ENCODE measurements at regions of chr15 and their contacts with region 1.

Region 1: GRCh38 chr15:58070801-58071418 is 5.4 kb upstream of the ALDH1A2 start:
- DNase-seq: no peak
- H3K4me3 ChIP-seq: no peak overlapping the region
- H3K27ac ChIP-seq: no peak overlapping the region
- H3K4me1 ChIP-seq: peaks cover 0 to 12% (median 8%) of the 10 kb centered on the region in 4 donors
- H3K27me3 ChIP-seq: peaks cover 2 to 43% (median 8%) of the 10 kb centered on the region in 4 donors
- CTCF ChIP-seq: peak; percentile 80 to 93 (median 85)
- EP300 ChIP-seq: no peak
- POLR2A ChIP-seq: no peak

Region 2: GRCh38 chr15:57561041-57561711 is 509.7 kb before region 1 on chr15:
- intact Hi-C with region 1: loop called (anchors 5 kb)
- DNase-seq: no peak
- H3K4me3 ChIP-seq: no peak overlapping the region
- H3K27ac ChIP-seq: peak overlapping the region in 3 of 4 donors; percentile 53 to 63 (median 54)
- H3K4me1 ChIP-seq: peaks cover 16 to 30% (median 21%) of the 10 kb centered on the region in 4 donors
- H3K27me3 ChIP-seq: no peaks in the 10 kb centered on the region
- CTCF ChIP-seq: peak; percentile 90 to 96 (median 95)
- EP300 ChIP-seq: no peak
- POLR2A ChIP-seq: no peak

Region 3: DNA sequence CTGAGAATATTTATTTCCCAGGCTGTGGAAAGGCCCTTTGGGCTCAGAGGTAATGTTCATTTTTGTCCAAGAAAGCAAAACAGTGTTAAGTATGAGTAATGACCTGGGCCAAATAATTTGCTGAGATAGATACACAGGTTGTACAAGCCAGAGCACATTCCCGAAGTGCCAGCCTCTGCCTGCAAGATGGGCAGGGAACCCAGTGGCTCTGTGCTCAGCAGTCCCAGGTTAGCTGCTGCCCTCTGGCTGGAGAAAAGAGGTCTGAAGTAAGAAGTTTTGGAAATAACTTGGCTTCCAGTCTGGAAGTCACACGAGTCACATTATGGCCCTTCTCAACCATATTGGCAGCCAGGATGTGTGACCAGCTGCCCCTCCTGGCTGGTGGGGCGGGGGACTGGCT is 459.0 kb before region 1 on chr15:
- intact Hi-C with region 1: no loop called
- DNase-seq: no peak
- H3K4me3 ChIP-seq: no peak overlapping the region
- H3K27ac ChIP-seq: peak overlapping the region; percentile 83 to 86 (median 84)
- H3K4me1 ChIP-seq: peaks cover 58 to 92% (median 71%) of the 10 kb centered on the region in 4 donors
- H3K27me3 ChIP-seq: no peaks in the 10 kb centered on the region
- CTCF ChIP-seq: peak; percentile 56 to 73 (median 70)
- EP300 ChIP-seq: no peak
- POLR2A ChIP-seq: no peak

Region 4: GRCh38 chr15:57743424-57743823 is 327.5 kb before region 1 on chr15:
- intact Hi-C with region 1: loop called (anchors 10 kb)
- DNase-seq: no peak
- H3K4me3 ChIP-seq: no peak overlapping the region
- H3K27ac ChIP-seq: no peak overlapping the region
- H3K4me1 ChIP-seq: peaks cover 0 to 6% (median 2%) of the 10 kb centered on the region in 4 donors
- H3K27me3 ChIP-seq: no peaks in the 10 kb centered on the region
- CTCF ChIP-seq: no peak
- EP300 ChIP-seq: no peak
- POLR2A ChIP-seq: no peak

Region 5: DNA sequence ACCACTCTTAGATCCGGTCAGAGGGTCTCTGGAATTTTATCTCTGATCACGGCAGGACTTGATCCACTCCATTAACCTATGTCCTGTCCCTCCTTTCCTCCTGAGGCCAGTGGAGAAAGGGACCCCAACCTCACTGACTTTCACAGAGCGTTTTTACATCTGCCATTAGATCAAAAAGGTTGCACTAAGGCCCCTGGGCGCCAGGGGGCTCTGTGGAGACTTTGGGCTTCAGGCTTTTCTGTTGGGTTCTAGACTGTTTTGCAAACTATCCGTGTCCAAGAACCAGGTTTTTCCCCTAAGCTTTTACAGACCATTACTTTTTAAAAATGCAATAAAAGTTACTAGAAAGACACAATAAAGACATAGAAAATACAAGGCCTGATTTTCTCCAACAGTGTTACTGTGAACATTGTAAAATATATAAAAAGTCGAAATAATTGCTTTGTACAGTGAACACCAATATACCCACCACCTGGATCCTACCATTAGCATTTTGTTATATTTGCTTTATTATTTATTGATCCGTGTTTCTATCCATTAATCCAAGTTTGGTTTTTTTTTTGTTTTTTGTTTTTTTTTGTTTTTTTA is 204.7 kb before region 1 on chr15:
- intact Hi-C with region 1: loop called (anchors 2 kb)
- DNase-seq: peak; percentile 50
- H3K4me3 ChIP-seq: no peak overlapping the region
- H3K27ac ChIP-seq: no peak overlapping the region
- H3K4me1 ChIP-seq: no peaks in the 10 kb centered on the region
- H3K27me3 ChIP-seq: peaks cover 0 to 13% (median 0%) of the 10 kb centered on the region in 4 donors
- CTCF ChIP-seq: peak; percentile 59 to 73 (median 59)
- EP300 ChIP-seq: no peak
- POLR2A ChIP-seq: no peak

Region 6: GRCh38 chr15:57890351-57890750 is 180.6 kb before region 1 on chr15:
- intact Hi-C with region 1: no loop called
- DNase-seq: no peak
- H3K4me3 ChIP-seq: no peak overlapping the region
- H3K27ac ChIP-seq: no peak overlapping the region
- H3K4me1 ChIP-seq: no peaks in the 10 kb centered on the region
- H3K27me3 ChIP-seq: no peaks in the 10 kb centered on the region
- CTCF ChIP-seq: no peak
- EP300 ChIP-seq: no peak
- POLR2A ChIP-seq: no peak

Region 7: DNA sequence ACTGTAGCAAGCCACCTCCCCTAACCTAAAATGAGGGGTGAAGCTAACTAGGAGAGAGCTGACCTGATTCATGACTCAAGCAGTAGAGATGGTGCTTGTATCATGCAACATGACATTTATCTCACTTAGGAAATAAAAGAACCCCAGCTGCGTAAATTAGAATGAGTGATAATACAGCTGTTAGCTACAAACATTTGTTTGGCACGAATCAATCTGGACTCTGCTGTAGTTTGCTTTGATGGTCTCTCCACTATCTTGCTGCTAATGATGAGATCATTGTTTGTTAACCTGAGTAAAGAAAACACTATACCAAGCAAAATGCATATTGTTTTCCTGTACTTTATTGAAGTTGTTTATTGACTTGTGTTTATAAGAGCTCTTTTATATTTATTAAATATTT is 98.0 kb before region 1 on chr15:
- intact Hi-C with region 1: loop called (anchors 5 kb)
- DNase-seq: no peak
- H3K4me3 ChIP-seq: no peak overlapping the region
- H3K27ac ChIP-seq: no peak overlapping the region
- H3K4me1 ChIP-seq: no peaks in the 10 kb centered on the region
- H3K27me3 ChIP-seq: no peaks in the 10 kb centered on the region
- CTCF ChIP-seq: no peak
- EP300 ChIP-seq: no peak
- POLR2A ChIP-seq: no peak

Region 8: DNA sequence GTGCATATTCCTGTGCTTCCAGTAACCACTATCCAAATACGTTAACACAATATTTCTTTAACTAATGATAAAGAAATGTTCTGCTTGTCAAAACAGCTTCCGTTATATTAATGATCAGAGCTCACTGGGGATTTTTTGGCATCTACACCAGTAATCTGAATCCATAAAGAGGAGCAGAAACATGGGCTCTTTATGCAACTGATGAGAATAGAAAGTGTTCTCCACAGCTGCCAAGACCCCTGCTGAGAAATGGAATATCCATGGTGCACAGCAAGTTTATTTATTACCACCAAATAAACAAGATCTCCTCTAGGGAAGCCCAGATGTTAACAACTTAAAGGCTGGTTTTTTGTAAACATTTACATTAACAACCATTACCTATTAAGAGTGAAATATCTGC is 59.9 kb before region 1 on chr15:
- intact Hi-C with region 1: no loop called
- DNase-seq: no peak
- H3K4me3 ChIP-seq: no peak overlapping the region
- H3K27ac ChIP-seq: no peak overlapping the region
- H3K4me1 ChIP-seq: peaks cover 0 to 8% (median 2%) of the 10 kb centered on the region in 4 donors
- H3K27me3 ChIP-seq: no peaks in the 10 kb centered on the region
- CTCF ChIP-seq: no peak
- EP300 ChIP-seq: no peak
- POLR2A ChIP-seq: no peak

Measured in esophagus muscularis mucosa (tissue), 4 donors.